Heart right ventricle (tissue), 16 donors: ENCODE measurements at regions of chr3 and their contacts with region 1.

Region 1: GRCh38 chr3:53709860-53710674 is 136.2 kb downstream of the CHDH start:
- DNase-seq: peak; percentile 58 to 60
- ATAC-seq: peak; percentile 55 to 78 (median 72)
- H3K4me3 ChIP-seq: no peak overlapping the region
- H3K27ac ChIP-seq: peak overlapping the region in 1 of 10 donors; percentile 65
- H3K4me1 ChIP-seq: peaks cover 0 to 42% (median 12%) of the 10 kb centered on the region in 9 donors
- H3K27me3 ChIP-seq: no peaks in the 10 kb centered on the region
- CTCF ChIP-seq: peak; percentile 54 to 82 (median 79)

Region 2: DNA sequence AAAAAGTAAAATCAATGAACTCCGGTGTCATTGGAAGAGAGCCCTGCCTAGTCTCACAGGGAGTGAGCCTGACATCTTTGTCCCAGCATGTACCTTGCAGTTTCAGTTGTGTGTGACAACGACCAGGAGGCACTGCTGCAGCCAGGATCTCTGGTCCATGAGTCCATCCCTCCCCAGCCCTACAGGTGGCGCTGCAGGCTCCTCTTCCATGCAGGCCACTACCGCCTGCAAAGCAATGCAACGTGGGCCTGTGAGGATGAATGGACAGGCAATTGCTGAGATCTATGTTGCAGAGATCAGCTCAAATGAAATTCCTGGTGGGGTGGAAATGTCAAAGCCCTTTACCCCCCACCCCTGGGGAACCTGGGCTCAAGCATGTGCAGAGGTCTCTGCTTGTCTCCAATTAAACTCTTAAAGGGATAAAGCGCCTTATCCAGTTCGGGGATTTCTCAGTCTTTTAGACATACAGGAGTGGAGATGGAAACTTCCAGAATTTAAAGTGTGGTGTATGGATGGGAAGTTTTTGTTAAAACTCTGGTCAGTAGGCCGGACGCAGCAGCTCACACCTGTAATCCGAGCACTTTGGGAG is 490.1 kb before region 1 on chr3:
- intact Hi-C with region 1: loop called in 3 of 10 experiments (anchors 5 to 10 kb)
- DNase-seq: peak; percentile 74 to 84
- ATAC-seq: peak; percentile 64 to 86 (median 78)
- H3K4me3 ChIP-seq: no peak overlapping the region
- H3K27ac ChIP-seq: no peak overlapping the region
- H3K4me1 ChIP-seq: peaks cover 0 to 21% (median 0%) of the 10 kb centered on the region in 9 donors
- H3K27me3 ChIP-seq: peaks cover 0 to 7% (median 0%) of the 10 kb centered on the region in 7 donors
- CTCF ChIP-seq: peak; percentile 63 to 97 (median 86)

Region 3: GRCh38 chr3:53293867-53294266 is 416.2 kb before region 1 on chr3:
- intact Hi-C with region 1: loop called in 6 of 10 experiments (anchors 2 to 10 kb)
- DNase-seq: no peak
- ATAC-seq: peak in 7 of 8 donors; percentile 7 to 65 (median 50)
- H3K4me3 ChIP-seq: no peak overlapping the region
- H3K27ac ChIP-seq: no peak overlapping the region
- H3K4me1 ChIP-seq: peaks cover 0 to 27% (median 0%) of the 10 kb centered on the region in 9 donors
- H3K27me3 ChIP-seq: no peaks in the 10 kb centered on the region
- CTCF ChIP-seq: no peak

Region 4: DNA sequence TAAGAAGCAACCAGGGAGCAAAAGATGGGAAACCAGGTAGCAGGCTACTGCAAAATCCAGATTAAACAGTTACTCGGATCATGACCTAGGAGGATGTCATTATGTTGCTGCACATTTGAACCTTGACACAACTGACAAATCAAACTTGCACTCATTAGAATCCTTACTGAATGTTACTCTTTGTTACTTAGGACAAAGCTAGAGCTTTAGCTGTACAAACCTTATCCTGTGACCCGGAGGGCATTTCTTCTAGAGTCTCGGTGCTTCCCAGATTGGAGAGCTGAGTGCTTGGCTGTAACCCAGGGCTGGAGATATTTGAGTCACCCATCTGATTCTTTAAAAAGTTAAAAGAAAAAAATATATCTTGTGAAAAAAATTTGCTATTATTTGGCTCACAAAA is 406.1 kb before region 1 on chr3:
- intact Hi-C with region 1: loop called in 9 of 10 experiments (anchors 2 to 10 kb)
- DNase-seq: no peak
- ATAC-seq: peak in 6 of 8 donors; percentile 25 to 55 (median 37)
- H3K4me3 ChIP-seq: no peak overlapping the region
- H3K27ac ChIP-seq: peak overlapping the region in 8 of 10 donors; percentile 42 to 78 (median 58)
- H3K4me1 ChIP-seq: peaks cover 0 to 26% (median 7%) of the 10 kb centered on the region in 9 donors
- H3K27me3 ChIP-seq: no peaks in the 10 kb centered on the region
- CTCF ChIP-seq: no peak

Region 5: DNA sequence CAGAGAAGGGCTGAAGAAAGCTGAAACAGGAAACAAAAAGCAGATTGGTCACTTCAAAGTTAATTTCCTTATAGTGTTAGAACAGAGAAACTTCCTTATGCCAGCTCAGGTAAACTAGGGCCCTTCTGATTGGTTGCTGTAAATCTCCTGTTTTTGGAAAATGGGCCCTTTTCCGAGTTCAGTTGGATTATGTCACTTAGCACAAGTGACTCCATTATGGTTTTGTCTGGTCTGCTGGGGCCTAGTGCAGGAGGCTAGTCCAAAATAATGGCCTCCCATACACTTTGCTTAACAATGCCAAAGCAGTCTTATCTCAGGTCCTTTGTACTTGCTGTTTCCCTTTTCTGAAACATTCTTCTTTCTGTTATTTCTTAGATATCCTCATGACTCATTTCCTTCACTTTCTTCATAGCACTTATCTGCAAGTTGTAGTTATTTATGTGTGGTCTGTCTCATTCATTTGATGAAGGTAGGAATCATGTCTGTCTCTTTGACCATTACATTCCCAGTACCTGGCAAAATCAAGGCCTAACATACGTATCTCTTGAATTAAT is 355.0 kb before region 1 on chr3:
- intact Hi-C with region 1: no loop called
- DNase-seq: no peak
- ATAC-seq: no peak
- H3K4me3 ChIP-seq: no peak overlapping the region
- H3K27ac ChIP-seq: no peak overlapping the region
- H3K4me1 ChIP-seq: peaks cover 0 to 2% (median 0%) of the 10 kb centered on the region in 9 donors
- H3K27me3 ChIP-seq: no peaks in the 10 kb centered on the region
- CTCF ChIP-seq: no peak

Region 6: GRCh38 chr3:53375019-53375418 is 335.0 kb before region 1 on chr3:
- intact Hi-C with region 1: loop called in 7 of 10 experiments (anchors 5 to 10 kb)
- DNase-seq: peak; percentile 6 to 65
- ATAC-seq: peak in 7 of 8 donors; percentile 60 to 93 (median 74)
- H3K4me3 ChIP-seq: no peak overlapping the region
- H3K27ac ChIP-seq: no peak overlapping the region
- H3K4me1 ChIP-seq: no peaks in the 10 kb centered on the region
- H3K27me3 ChIP-seq: peaks cover 0 to 16% (median 0%) of the 10 kb centered on the region in 7 donors
- CTCF ChIP-seq: peak; percentile 39 to 78 (median 60)

Region 7: GRCh38 chr3:53677413-53677812 is 32.7 kb before region 1 on chr3:
- intact Hi-C with region 1: loop called in 2 of 10 experiments (anchors 5 kb)
- DNase-seq: no peak
- ATAC-seq: peak in 7 of 8 donors; percentile 29 to 83 (median 81)
- H3K4me3 ChIP-seq: no peak overlapping the region
- H3K27ac ChIP-seq: no peak overlapping the region
- H3K4me1 ChIP-seq: peaks cover 0 to 7% (median 0%) of the 10 kb centered on the region in 9 donors
- H3K27me3 ChIP-seq: peaks cover 0 to 54% (median 30%) of the 10 kb centered on the region in 7 donors
- CTCF ChIP-seq: peak in 7 of 9 donors; percentile 30 to 53 (median 40)

Region 8: GRCh38 chr3:53865732-53866499 is 155.8 kb after region 1 on chr3:
- intact Hi-C with region 1: loop called in 1 of 10 experiments (anchors 10 kb)
- DNase-seq: no peak
- ATAC-seq: no peak
- H3K4me3 ChIP-seq: no peak overlapping the region
- H3K27ac ChIP-seq: no peak overlapping the region
- H3K4me1 ChIP-seq: no peaks in the 10 kb centered on the region
- H3K27me3 ChIP-seq: no peaks in the 10 kb centered on the region
- CTCF ChIP-seq: no peak

Region 9: DNA sequence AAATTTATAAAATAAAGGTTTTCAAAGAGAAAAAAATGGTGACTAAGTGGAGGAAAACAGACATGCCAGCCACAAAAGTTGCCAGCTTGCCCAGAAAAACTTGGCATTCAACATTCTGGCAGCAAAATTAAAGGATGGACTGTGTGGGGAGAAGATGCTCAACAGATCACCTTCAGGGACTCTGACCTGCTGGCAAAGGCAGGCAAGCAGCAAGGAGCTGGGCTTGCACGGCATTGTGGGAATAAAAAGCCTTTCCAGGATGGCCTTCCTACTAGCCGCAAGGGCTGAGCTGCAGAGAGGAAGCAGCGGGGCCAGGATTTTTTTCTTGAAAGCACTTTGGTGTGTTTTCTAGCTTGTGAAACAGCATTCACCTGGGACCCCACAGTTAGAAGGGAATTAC is 310.4 kb after region 1 on chr3:
- intact Hi-C with region 1: no loop called
- DNase-seq: no peak
- ATAC-seq: no peak
- H3K4me3 ChIP-seq: no peak overlapping the region
- H3K27ac ChIP-seq: no peak overlapping the region
- H3K4me1 ChIP-seq: no peaks in the 10 kb centered on the region
- H3K27me3 ChIP-seq: peaks cover 0 to 4% (median 0%) of the 10 kb centered on the region in 7 donors
- CTCF ChIP-seq: no peak